IMR-90 (cell line): ENCODE measurements at regions of chr7 and their contacts with region 1.

Region 1: DNA sequence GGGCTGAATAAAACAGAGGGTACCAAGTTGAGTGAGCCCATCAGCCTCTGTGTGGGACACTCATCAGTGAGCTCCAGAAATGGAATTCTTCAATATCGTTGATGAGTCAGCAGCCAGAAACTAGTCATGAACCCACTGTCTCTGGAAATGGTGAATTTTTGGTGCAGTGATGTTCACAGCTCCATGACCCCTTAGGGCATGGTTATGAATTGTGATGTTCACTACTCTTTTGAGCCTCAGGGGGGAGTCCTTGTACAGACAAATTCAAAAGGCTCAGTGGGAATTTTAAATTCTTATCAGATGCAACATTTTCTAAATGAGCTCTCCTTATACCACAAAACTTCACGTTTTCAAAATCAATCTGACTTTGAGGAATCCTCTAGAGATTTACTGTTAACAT is 335.7 kb downstream of the PHTF2 start:
- DNase-seq: peak; percentile 88
- ATAC-seq: peak; percentile 86
- H3K4me3 ChIP-seq: no peak overlapping the region
- H3K27ac ChIP-seq: no peak overlapping the region
- H3K4me1 ChIP-seq: peaks cover 3% of the 10 kb centered on the region
- H3K27me3 ChIP-seq: no peaks in the 10 kb centered on the region
- CTCF ChIP-seq: peak; percentile 80
- POLR2A ChIP-seq: 0 out of 2 replicates have a peak, but pooled peaks have one; percentile 35
- RAD21 ChIP-seq: peak; percentile 87

Region 2: GRCh38 chr7:77409739-77410547 is 724.3 kb before region 1 on chr7:
- CTCF ChIA-PET with region 1: no interaction called
- POLR2A ChIA-PET with region 1: no interaction called
- dilution Hi-C with region 1: no loop called
- in situ Hi-C with region 1: no loop called
- intact Hi-C with region 1: no loop called
- DNase-seq: peak; percentile 87
- ATAC-seq: peak; percentile 84
- H3K4me3 ChIP-seq: no peak overlapping the region
- H3K27ac ChIP-seq: peak overlapping the region; percentile 48; the same call in 1 of the 2 replicates
- H3K4me1 ChIP-seq: peaks cover 3% of the 10 kb centered on the region; the same call in 1 of the 2 replicates
- H3K27me3 ChIP-seq: no peaks in the 10 kb centered on the region
- CTCF ChIP-seq: no peak
- POLR2A ChIP-seq: no peak
- RAD21 ChIP-seq: no peak

Region 3: GRCh38 chr7:77903597-77903996 is 230.7 kb before region 1 on chr7:
- CTCF ChIA-PET with region 1: no interaction called
- POLR2A ChIA-PET with region 1: no interaction called
- dilution Hi-C with region 1: no loop called
- in situ Hi-C with region 1: no loop called
- intact Hi-C with region 1: no loop called
- DNase-seq: peak; percentile 2
- ATAC-seq: peak; percentile 25
- H3K4me3 ChIP-seq: no peak overlapping the region
- H3K27ac ChIP-seq: no peak overlapping the region
- H3K4me1 ChIP-seq: no peaks in the 10 kb centered on the region; the same call in 1 of the 2 replicates
- H3K27me3 ChIP-seq: no peaks in the 10 kb centered on the region
- CTCF ChIP-seq: peak; percentile 19; the same call in 1 of the 2 replicates
- POLR2A ChIP-seq: no peak
- RAD21 ChIP-seq: peak; percentile 11; the same call in 1 of the 2 replicates

Region 4: DNA sequence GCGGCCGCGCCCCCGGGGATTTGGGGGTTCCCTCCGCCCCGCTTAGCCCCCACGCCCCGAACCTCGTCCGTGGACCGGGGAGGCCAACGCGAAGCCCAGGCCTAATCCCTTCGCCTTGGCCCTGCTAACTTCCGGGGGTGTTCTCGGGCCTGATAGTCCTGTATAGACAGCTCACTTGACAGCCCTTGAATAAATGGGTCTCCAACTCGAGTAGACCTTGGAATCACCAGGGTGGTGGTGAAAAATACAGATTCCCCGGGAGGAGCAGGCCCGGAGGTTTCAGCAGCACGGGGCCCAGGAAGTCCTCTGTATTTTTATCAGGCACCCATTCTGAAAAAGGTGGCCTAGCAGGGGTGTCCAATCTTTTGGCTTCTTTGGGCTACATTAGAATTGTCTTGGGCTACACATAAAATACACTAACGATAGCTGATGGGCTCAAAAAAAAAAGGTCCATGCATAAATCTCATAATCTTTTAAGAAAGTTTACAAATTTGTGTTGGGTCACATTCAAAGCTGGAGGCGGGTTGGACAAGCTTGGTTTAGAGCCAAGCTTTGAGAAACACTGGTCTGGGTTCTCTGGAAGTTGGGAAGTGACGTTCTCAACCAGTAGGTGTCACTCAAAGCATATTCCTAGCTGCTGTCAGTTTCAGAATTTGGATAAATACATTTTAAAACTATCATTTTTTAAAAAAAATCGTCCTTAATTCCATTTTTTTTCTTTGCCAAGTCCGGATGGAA is 114.0 kb before region 1 on chr7:
- CTCF ChIA-PET with region 1: interaction called, 8 read pairs
- POLR2A ChIA-PET with region 1: no interaction called
- dilution Hi-C with region 1: no loop called
- in situ Hi-C with region 1: no loop called
- intact Hi-C with region 1: loop called (anchors 1 kb)
- DNase-seq: peak; percentile 91
- ATAC-seq: peak; percentile 50
- H3K4me3 ChIP-seq: no peak overlapping the region
- H3K27ac ChIP-seq: peak overlapping the region; percentile 92
- H3K4me1 ChIP-seq: peaks cover 5% of the 10 kb centered on the region
- H3K27me3 ChIP-seq: no peaks in the 10 kb centered on the region
- CTCF ChIP-seq: peak; percentile 86
- POLR2A ChIP-seq: no peak
- RAD21 ChIP-seq: peak; percentile 83

Region 5: DNA sequence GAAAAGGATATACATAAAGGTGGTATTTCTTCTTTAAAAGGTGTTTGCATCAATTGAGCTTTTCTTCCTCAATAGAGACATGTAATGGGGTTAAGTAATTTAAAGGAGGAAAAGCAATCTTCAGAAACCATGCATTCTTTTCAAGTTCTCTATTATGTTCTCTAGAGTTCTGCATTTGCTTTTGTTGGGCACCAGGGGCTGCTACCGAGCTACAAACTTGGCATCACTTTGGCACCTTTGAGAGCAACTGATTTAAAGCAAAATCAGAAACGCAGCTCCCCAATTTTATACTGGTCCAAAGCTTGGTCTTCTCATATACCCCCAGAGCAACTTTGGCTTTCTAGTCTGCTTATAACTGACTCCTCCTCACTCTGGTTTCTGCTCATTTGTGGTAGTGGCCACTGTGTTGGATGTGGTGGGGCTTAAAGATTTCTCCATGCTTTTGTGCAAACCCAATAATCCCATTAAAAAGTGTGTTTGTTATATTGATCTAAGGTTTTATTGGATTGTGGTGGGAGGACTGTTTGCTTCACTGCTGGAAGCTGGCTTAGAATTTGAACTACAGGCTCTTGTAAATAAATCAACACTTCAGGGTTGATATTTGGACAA is 376.4 kb after region 1 on chr7:
- CTCF ChIA-PET with region 1: no interaction called
- POLR2A ChIA-PET with region 1: no interaction called
- dilution Hi-C with region 1: no loop called
- in situ Hi-C with region 1: no loop called
- intact Hi-C with region 1: loop called (anchors 2 kb)
- DNase-seq: peak; percentile 67
- ATAC-seq: peak; percentile 82
- H3K4me3 ChIP-seq: no peak overlapping the region
- H3K27ac ChIP-seq: no peak overlapping the region
- H3K4me1 ChIP-seq: no peaks in the 10 kb centered on the region
- H3K27me3 ChIP-seq: no peaks in the 10 kb centered on the region
- CTCF ChIP-seq: peak; percentile 79
- POLR2A ChIP-seq: no peak
- RAD21 ChIP-seq: peak; percentile 88

Region 6: DNA sequence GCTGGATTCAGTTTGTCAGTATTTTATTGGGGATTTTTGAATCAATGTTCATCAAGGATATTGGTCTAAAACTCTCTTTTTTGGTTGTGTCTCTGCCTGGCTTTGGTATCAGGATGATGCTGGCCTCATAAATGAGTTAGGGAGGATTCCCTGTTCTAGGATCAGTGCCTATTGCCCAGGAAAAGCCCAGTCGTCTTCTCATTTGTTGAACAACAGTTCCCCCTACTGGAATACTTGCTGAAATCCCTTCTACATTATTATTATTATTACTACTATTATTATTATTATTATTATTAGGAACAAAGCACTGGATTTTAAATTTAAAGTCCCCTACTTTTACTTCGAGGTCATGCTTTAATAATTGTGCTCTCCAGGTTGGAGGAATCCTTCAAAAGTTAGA is 790.3 kb after region 1 on chr7:
- CTCF ChIA-PET with region 1: no interaction called
- POLR2A ChIA-PET with region 1: no interaction called
- dilution Hi-C with region 1: no loop called
- in situ Hi-C with region 1: loop called (anchors 25 kb)
- intact Hi-C with region 1: loop called (anchors 5 kb)
- DNase-seq: peak; percentile 43
- ATAC-seq: no peak
- H3K4me3 ChIP-seq: no peak overlapping the region
- H3K27ac ChIP-seq: no peak overlapping the region
- H3K4me1 ChIP-seq: no peaks in the 10 kb centered on the region
- H3K27me3 ChIP-seq: no peaks in the 10 kb centered on the region
- CTCF ChIP-seq: peak; percentile 45
- POLR2A ChIP-seq: no peak
- RAD21 ChIP-seq: peak; percentile 59

Region 7: GRCh38 chr7:79176859-79177477 is 1042.7 kb after region 1 on chr7:
- CTCF ChIA-PET with region 1: interaction called, 3 read pairs
- POLR2A ChIA-PET with region 1: no interaction called
- dilution Hi-C with region 1: no loop called
- in situ Hi-C with region 1: no loop called
- intact Hi-C with region 1: loop called (anchors 10 kb)
- DNase-seq: peak; percentile 68
- ATAC-seq: peak; percentile 80
- H3K4me3 ChIP-seq: no peak overlapping the region
- H3K27ac ChIP-seq: no peak overlapping the region
- H3K4me1 ChIP-seq: no peaks in the 10 kb centered on the region; the same call in 1 of the 2 replicates
- H3K27me3 ChIP-seq: no peaks in the 10 kb centered on the region
- CTCF ChIP-seq: peak; percentile 70
- POLR2A ChIP-seq: no peak
- RAD21 ChIP-seq: peak; percentile 81